ENCODE measurements at regions of chr3 and their contacts with region 1.

Region 1: GRCh38 chr3:112333002-112333380 is at the start of gene CD200:
- DNase-seq: peak in 1 of 2 donors; percentile 85
- H3K4me3 ChIP-seq: peak within 1 kb of the TSS; percentile 71 to 75
- H3K27ac ChIP-seq: peak within 1 kb of the TSS; percentile 95
- H3K4me1 ChIP-seq: peaks cover 0 to 4% of the 10 kb centered on the region in 2 donors
- H3K27me3 ChIP-seq: no peaks in the 10 kb centered on the region
- CTCF ChIP-seq: peak; percentile 11 to 26 (median 14)
- total RNA-seq, gene CD200: 3.6 TPM

Region 2: DNA sequence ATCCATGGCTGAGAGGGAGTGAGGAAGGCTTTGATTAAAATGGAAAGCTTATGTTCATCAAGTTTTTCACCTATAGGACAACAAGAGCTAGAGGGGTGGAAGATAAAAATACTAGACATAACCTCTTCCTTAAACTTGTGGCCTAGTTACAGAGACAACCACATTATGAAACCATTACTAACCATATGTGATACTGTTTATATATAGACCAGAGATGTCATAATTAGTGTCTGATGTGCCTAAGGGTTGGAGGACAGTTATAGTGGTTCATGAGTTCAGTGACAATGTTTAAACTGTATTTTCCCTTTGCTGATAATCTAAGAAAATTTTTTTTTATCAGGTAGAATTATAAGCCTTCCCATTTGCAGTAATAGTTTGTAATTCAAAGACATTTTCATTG is 450.2 kb before region 1 on chr3:
- intact Hi-C with region 1: no loop called
- DNase-seq: no peak
- H3K4me3 ChIP-seq: no peak overlapping the region
- H3K27ac ChIP-seq: peak overlapping the region; percentile 14 to 51
- H3K4me1 ChIP-seq: peaks cover 7 to 12% of the 10 kb centered on the region in 2 donors
- H3K27me3 ChIP-seq: no peaks in the 10 kb centered on the region
- CTCF ChIP-seq: no peak

Region 3: GRCh38 chr3:112303764-112304325 is 29.1 kb before region 1 on chr3:
- intact Hi-C with region 1: no loop called
- DNase-seq: no peak
- H3K4me3 ChIP-seq: peak overlapping the region; percentile 63 to 69
- H3K27ac ChIP-seq: no peak overlapping the region
- H3K4me1 ChIP-seq: peaks cover 0 to 8% of the 10 kb centered on the region in 2 donors
- H3K27me3 ChIP-seq: no peaks in the 10 kb centered on the region
- CTCF ChIP-seq: no peak

Region 4: DNA sequence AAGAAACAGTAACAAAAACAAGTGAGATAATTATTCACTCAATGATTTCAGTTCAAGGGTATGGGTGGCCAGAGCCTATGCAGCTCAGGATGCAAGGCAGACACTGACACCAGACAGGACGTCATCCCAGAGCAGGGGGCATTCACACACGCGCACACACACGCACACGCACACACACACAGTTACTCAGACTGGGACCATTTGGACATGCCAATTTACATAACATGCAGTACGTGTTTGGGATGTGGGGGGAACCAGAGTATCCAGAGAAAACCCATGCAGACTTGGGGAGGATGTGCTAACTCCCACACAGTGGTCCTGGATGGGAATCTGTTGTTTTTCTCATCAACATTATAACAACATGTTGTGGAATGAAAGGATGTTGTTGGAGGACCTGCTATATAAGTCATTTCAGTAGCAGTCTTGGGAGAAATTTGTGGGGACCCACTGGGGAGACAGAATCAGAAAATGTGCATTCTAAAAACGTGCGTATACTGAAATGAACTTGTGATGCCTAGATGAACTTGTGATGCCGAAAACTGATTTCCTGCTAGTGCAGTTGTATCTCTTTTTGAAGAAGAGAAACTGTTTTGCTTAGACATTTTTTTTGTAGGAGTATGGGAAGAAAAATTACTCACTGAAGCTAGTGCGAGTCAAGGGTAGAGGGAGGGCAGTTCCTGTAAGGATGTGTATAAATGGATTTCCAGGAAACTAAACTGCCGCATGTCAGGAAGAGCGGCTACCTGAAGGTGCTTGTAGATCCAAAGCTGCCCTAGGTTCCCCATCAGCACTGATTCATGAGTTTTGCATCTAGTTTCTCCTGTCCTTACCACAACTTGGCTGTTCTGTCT is 25.2 kb after region 1 on chr3:
- intact Hi-C with region 1: loop called (anchors 2 kb)
- DNase-seq: no peak
- H3K4me3 ChIP-seq: peak overlapping the region; percentile 35 to 59
- H3K27ac ChIP-seq: peak overlapping the region; percentile 84 to 89
- H3K4me1 ChIP-seq: peaks cover 3 to 31% of the 10 kb centered on the region in 2 donors
- H3K27me3 ChIP-seq: no peaks in the 10 kb centered on the region
- CTCF ChIP-seq: no peak

Region 5: DNA sequence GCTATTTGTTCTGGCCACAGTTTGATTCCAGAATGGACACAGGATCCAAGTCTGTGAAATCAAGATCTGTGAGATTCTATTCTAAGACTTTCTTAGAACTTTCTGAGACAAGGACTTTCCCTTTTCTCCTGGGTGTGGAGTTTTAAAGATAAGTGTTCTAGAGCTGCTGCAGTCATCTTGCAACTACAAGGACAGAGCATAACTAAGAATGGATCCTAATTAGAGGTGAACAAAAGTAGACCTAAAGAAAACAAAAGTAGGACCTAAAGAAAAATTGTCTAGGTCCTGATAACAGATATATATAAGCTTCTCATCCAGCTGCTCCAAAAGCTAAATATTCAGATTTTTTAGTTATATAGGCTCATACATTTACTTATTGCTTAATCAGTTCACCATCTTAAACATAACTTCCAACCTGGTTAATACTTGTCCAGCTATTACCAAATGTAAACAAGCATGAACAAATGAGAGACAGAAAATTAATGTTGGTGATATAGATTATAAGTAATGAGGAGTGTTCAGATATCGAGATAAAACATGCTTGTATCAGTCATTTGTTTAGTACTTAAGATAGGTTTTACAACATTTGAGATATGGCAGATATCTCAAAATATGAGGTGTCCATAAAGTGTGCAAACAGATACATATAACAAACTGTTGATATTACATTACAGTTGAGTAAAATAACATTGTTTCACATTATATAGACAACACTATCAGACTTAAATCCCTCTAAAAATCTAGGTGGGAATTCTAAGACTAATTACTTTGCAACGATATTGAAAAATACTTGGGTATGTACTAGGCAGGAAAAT is 75.1 kb after region 1 on chr3:
- intact Hi-C with region 1: loop called (anchors 5 kb)
- DNase-seq: no peak
- H3K4me3 ChIP-seq: no peak overlapping the region
- H3K27ac ChIP-seq: peak overlapping the region; percentile 72 to 75
- H3K4me1 ChIP-seq: peaks cover 4 to 24% of the 10 kb centered on the region in 2 donors
- H3K27me3 ChIP-seq: no peaks in the 10 kb centered on the region
- CTCF ChIP-seq: no peak

Region 6: GRCh38 chr3:112508860-112509259 is 175.9 kb after region 1 on chr3:
- intact Hi-C with region 1: loop called (anchors 2 kb)
- DNase-seq: no peak
- H3K4me3 ChIP-seq: no peak overlapping the region
- H3K27ac ChIP-seq: peak overlapping the region; percentile 22 to 62
- H3K4me1 ChIP-seq: peaks cover 0 to 4% of the 10 kb centered on the region in 2 donors
- H3K27me3 ChIP-seq: no peaks in the 10 kb centered on the region
- CTCF ChIP-seq: no peak

Region 7: GRCh38 chr3:112990672-112991602 is 657.9 kb after region 1 on chr3 and contains the start of gene GTPBP8:
- intact Hi-C with region 1: no loop called
- DNase-seq: peak; percentile 58 to 94
- H3K4me3 ChIP-seq: peak within 1 kb of the TSS; percentile 70 to 91
- H3K27ac ChIP-seq: peak within 1 kb of the TSS; percentile 92 to 96
- H3K4me1 ChIP-seq: peaks cover 2 to 5% of the 10 kb centered on the region in 2 donors
- H3K27me3 ChIP-seq: no peaks in the 10 kb centered on the region
- CTCF ChIP-seq: peak in 1 of 3 experiments; percentile 11
- total RNA-seq, gene GTPBP8: 1.6 TPM

Measured in ascending aorta (tissue), 2 donors.